ENCODE measurements at regions of chr14 and their contacts with region 1.

Region 1: DNA sequence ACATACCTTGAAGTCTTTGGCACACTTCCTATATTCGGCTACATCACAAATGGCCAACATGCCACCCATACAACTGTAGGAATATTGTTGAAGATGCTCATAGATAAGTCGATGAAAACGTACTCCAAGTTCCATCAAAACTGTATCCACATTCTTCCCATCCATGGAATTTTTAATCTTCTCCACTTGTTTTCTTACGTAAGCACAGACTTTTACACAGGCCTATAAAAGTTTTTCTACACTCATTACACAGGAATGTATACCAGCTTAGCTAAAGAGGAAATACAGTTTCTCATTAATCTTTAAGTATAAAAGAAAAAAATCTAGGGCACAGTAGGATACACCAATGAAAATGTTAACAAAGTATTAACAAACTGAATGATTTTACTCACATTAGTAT is 59.1 kb downstream of the EXOC5 start:
- DNase-seq: no peak
- ATAC-seq: no peak
- H3K4me3 ChIP-seq: no peak overlapping the region
- H3K27ac ChIP-seq: no peak overlapping the region
- H3K4me1 ChIP-seq: no peaks in the 10 kb centered on the region; a peak in 1 of 5 replicates
- H3K27me3 ChIP-seq: no peaks in the 10 kb centered on the region
- CTCF ChIP-seq: no peak
- EP300 ChIP-seq: no peak
- POLR2A ChIP-seq: no peak
- RAD21 ChIP-seq: no peak

Region 2: GRCh38 chr14:57287745-57288144 is 78.2 kb after region 1 on chr14:
- CTCF ChIA-PET with region 1: no interaction called
- POLR2A ChIA-PET with region 1: no interaction called
- in situ Hi-C with region 1: no loop called
- intact Hi-C with region 1: loop called (anchors 5 kb)
- DNase-seq: peak; percentile 10 to 57 (median 17)
- ATAC-seq: peak; percentile 65; the same call in 2 of the 3 replicates
- H3K4me3 ChIP-seq: no peak overlapping the region
- H3K27ac ChIP-seq: no peak overlapping the region
- H3K4me1 ChIP-seq: 0 out of 5 replicates have a peak, but pooled peaks cover 0 to 4% of the 10 kb centered on the region in 2 experiments
- H3K27me3 ChIP-seq: no peaks in the 10 kb centered on the region
- CTCF ChIP-seq: no peak
- EP300 ChIP-seq: 0 out of 2 replicates have a peak, but pooled peaks have one; percentile 34
- POLR2A ChIP-seq: no peak
- RAD21 ChIP-seq: no peak

Measured in K562 (cell line).